ENCODE measurements at regions of chr19 and their contacts with region 1.

Region 1: GRCh38 chr19:17052439-17053210 is 22.6 kb downstream of the HAUS8 start:
- DNase-seq: peak; percentile 27 to 42 (median 34)
- ATAC-seq: peak; percentile 35
- H3K4me3 ChIP-seq: no peak overlapping the region
- H3K27ac ChIP-seq: no peak overlapping the region
- H3K4me1 ChIP-seq: no peaks in the 10 kb centered on the region
- H3K27me3 ChIP-seq: no peaks in the 10 kb centered on the region
- CTCF ChIP-seq: peak in 6 of 7 experiments; percentile 31 to 52 (median 38)
- POLR2A ChIP-seq: no peak

Region 2: GRCh38 chr19:16771618-16772017 is 281.0 kb before region 1 on chr19:
- intact Hi-C with region 1: loop called (anchors 5 kb)
- DNase-seq: peak; percentile 74 to 83 (median 80)
- ATAC-seq: peak; percentile 56
- H3K4me3 ChIP-seq: no peak overlapping the region
- H3K27ac ChIP-seq: no peak overlapping the region
- H3K4me1 ChIP-seq: no peaks in the 10 kb centered on the region
- H3K27me3 ChIP-seq: no peaks in the 10 kb centered on the region
- CTCF ChIP-seq: peak; percentile 74 to 85 (median 77)
- POLR2A ChIP-seq: no peak